Colonic mucosa (tissue), 4 donors: ENCODE measurements at regions of chr7 and their contacts with region 1.

Region 1: GRCh38 chr7:1473864-1474512 is 14.7 kb upstream of the MICALL2 start:
- DNase-seq: peak; percentile 93
- H3K4me3 ChIP-seq: no peak overlapping the region
- H3K27ac ChIP-seq: no peak overlapping the region
- H3K4me1 ChIP-seq: no peaks in the 10 kb centered on the region
- H3K27me3 ChIP-seq: no peaks in the 10 kb centered on the region
- CTCF ChIP-seq: peak; percentile 88

Region 2: GRCh38 chr7:749140-749551 is 724.8 kb before region 1 on chr7:
- intact Hi-C with region 1: no loop called
- DNase-seq: no peak
- H3K4me3 ChIP-seq: no peak overlapping the region
- H3K27ac ChIP-seq: no peak overlapping the region
- H3K4me1 ChIP-seq: no peaks in the 10 kb centered on the region
- H3K27me3 ChIP-seq: no peaks in the 10 kb centered on the region
- CTCF ChIP-seq: no peak

Region 3: DNA sequence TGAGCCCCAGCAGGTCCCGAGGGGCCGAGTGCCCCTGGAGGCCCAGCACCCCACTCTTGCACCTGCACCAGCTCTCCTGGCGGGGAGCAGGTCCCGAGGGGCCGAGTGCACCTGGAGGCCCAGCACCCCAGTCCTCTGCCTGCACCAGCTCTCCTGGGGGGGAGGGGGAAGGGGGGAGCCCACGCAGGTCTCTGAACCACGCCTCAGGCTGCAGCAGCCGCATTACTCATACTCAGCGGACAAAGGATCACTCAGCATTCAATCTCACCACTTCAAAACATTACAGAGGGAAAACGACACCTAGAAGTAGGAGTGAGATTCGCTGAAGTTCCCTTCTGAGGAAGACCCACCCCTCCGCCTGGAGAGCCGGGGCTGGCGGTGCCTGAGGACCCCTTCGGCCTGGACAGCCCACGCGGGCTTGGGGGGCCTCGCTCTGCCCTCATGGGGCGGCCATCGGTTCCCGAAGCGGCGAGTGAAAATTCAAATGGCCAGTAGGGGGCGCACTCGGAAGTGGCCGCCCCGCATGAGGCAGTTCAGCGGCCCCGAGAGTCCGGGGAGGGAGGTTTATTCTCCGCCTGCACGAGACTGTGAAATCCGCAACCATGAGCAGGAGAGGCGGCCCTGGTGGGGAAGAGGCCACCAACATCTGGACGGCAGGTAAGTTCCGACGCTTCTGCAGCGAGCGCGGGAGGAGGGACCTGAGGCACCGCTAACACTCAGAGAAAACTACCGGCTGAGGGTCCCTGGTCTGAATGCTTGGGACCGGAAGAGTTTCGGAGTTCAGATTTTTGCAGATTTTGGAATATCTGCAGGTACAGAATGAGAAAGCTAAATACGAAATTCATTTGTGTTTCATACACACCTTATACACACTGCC is 387.2 kb before region 1 on chr7:
- intact Hi-C with region 1: no loop called
- DNase-seq: peak; percentile 85
- H3K4me3 ChIP-seq: peak overlapping the region; percentile 30
- H3K27ac ChIP-seq: no peak overlapping the region
- H3K4me1 ChIP-seq: no peaks in the 10 kb centered on the region
- H3K27me3 ChIP-seq: no peaks in the 10 kb centered on the region
- CTCF ChIP-seq: peak; percentile 82

Region 4: GRCh38 chr7:1225441-1226185 is 248.4 kb before region 1 on chr7:
- intact Hi-C with region 1: loop called (anchors 2 kb)
- DNase-seq: peak; percentile 24
- H3K4me3 ChIP-seq: no peak overlapping the region
- H3K27ac ChIP-seq: no peak overlapping the region
- H3K4me1 ChIP-seq: no peaks in the 10 kb centered on the region
- H3K27me3 ChIP-seq: peaks cover 72% of the 10 kb centered on the region
- CTCF ChIP-seq: peak; percentile 72

Region 5: GRCh38 chr7:1432411-1433082 is 41.4 kb before region 1 on chr7:
- intact Hi-C with region 1: loop called (anchors 5 kb)
- DNase-seq: peak; percentile 85
- H3K4me3 ChIP-seq: no peak overlapping the region
- H3K27ac ChIP-seq: no peak overlapping the region
- H3K4me1 ChIP-seq: no peaks in the 10 kb centered on the region
- H3K27me3 ChIP-seq: no peaks in the 10 kb centered on the region
- CTCF ChIP-seq: peak; percentile 98

Region 6: GRCh38 chr7:1593091-1593866 is 119.3 kb after region 1 on chr7:
- intact Hi-C with region 1: no loop called
- DNase-seq: no peak
- H3K4me3 ChIP-seq: no peak overlapping the region
- H3K27ac ChIP-seq: no peak overlapping the region
- H3K4me1 ChIP-seq: no peaks in the 10 kb centered on the region
- H3K27me3 ChIP-seq: no peaks in the 10 kb centered on the region
- CTCF ChIP-seq: no peak